ENCODE measurements at regions of chr2 and their contacts with region 1.

Region 1: DNA sequence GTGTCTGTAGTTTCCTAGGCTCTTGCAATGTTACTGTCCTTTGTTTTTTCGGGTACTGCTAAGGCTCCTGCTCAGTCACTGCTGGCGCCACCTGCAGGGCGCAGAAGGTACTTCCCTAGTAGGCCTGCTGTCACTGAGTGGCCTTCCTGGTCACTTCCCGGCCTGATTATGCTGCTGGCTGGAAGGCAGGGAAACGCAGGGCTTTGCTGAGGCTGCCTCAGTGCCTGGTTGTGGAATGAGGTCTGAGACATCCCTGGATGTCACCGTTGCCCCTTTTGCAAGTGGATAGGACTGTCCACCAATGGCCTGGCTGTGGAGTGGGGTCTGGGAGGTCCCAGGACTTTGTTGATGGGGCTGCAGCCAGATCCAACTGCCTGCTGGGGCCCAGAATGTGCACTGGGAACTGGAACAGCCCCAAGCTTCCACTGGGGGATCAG is 13.1 kb downstream of the DAW1 start:
- DNase-seq: peak in 1 of 2 donors; percentile 68
- H3K4me3 ChIP-seq: no peak overlapping the region
- H3K27ac ChIP-seq: no peak overlapping the region
- H3K4me1 ChIP-seq: peaks cover 0 to 11% (median 0%) of the 10 kb centered on the region in 4 donors
- H3K27me3 ChIP-seq: no peaks in the 10 kb centered on the region
- CTCF ChIP-seq: peak; percentile 44 to 60

Region 2: DNA sequence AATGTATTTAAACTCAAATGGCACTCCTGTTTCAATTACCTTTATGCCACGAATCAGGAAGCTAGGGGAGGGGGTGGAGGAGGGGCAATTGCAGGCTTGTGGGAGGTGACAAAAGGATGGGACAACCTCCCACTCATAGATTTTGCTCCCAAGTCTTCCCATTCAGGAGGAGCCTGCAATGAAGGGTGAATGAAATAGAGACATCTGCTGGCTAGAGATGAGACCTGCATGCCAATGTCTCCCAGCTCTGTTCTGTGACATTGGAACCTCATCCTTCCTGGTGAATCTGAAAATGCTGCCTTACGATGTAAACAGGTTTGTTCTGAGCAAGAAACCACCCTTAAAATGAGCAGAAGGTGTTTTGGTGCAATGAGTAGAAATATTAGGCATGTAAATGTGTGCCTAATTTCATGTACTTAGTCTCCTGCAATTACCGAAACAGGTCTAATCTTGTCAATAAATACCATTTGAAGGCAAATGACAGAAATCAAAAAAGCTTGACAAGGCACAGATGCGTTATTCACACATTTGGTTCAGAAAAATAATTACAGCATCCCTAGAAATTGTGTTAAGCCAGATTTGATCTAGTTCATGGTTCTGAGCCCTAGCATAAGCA is 1389.3 kb after region 1 on chr2:
- intact Hi-C with region 1: loop called (anchors 10 kb)
- DNase-seq: peak in 1 of 2 donors; percentile 40
- H3K4me3 ChIP-seq: peak overlapping the region; percentile 18 to 36
- H3K27ac ChIP-seq: no peak overlapping the region
- H3K4me1 ChIP-seq: peaks cover 0 to 17% (median 5%) of the 10 kb centered on the region in 4 donors
- H3K27me3 ChIP-seq: peaks cover 0 to 4% of the 10 kb centered on the region in 2 donors
- CTCF ChIP-seq: peak; percentile 64 to 65